ENCODE measurements at regions of chr3 and their contacts with region 1.

Region 1: GRCh38 chr3:181805703-181806102 is 94.0 kb downstream of the SOX2 start:
- DNase-seq: no peak
- H3K4me3 ChIP-seq: no peak overlapping the region
- H3K27ac ChIP-seq: no peak overlapping the region
- H3K4me1 ChIP-seq: no peaks in the 10 kb centered on the region
- H3K27me3 ChIP-seq: no peaks in the 10 kb centered on the region
- CTCF ChIP-seq: no peak
- POLR2A ChIP-seq: no peak

Region 2: DNA sequence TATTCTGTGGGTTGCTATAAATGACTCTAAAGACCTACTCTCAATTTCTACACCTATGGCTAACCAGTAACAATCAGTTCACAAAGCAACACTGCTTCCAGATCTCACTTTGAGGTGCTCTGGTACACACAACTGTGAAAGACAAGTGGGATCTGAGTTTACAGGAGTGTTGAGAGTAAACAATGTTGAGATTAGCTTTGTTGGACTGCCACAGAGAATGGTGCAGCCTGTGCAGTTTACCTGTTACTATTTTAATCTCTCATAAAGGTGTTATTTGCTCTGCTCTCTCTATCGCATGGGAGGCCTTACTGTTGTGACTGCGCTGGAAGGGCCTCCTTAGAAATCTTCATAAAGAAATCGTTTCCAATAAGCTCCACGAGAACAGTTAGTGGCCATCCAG is 18.0 kb after region 1 on chr3:
- intact Hi-C with region 1: loop called (anchors 2 kb)
- DNase-seq: no peak
- H3K4me3 ChIP-seq: no peak overlapping the region
- H3K27ac ChIP-seq: no peak overlapping the region
- H3K4me1 ChIP-seq: no peaks in the 10 kb centered on the region
- H3K27me3 ChIP-seq: no peaks in the 10 kb centered on the region
- CTCF ChIP-seq: no peak
- POLR2A ChIP-seq: no peak